GM12878 (cell line): ENCODE measurements at regions of chr9 and their contacts with region 1.

Region 1: GRCh38 chr9:27561685-27562084 is 11.6 kb downstream of the C9orf72 start:
- DNase-seq: no peak
- ATAC-seq: peak; percentile 60
- H3K4me3 ChIP-seq: no peak overlapping the region
- H3K27ac ChIP-seq: no peak overlapping the region
- H3K4me1 ChIP-seq: peaks cover 10% of the 10 kb centered on the region; the same call in 1 of the 2 replicates
- H3K27me3 ChIP-seq: no peaks in the 10 kb centered on the region
- CTCF ChIP-seq: no peak
- EP300 ChIP-seq: no peak
- POLR2A ChIP-seq: no peak
- RAD21 ChIP-seq: no peak

Region 2: GRCh38 chr9:27394154-27394825 is 167.4 kb before region 1 on chr9:
- CTCF ChIA-PET with region 1: no interaction called
- POLR2A ChIA-PET with region 1: no interaction called
- RAD21 ChIA-PET with region 1: no interaction called
- SMC1A ChIA-PET with region 1: no interaction called
- in situ Hi-C with region 1: no loop called
- intact Hi-C with region 1: no loop called
- DNase-seq: no peak
- ATAC-seq: no peak
- H3K4me3 ChIP-seq: no peak overlapping the region
- H3K27ac ChIP-seq: no peak overlapping the region
- H3K4me1 ChIP-seq: no peaks in the 10 kb centered on the region
- H3K27me3 ChIP-seq: no peaks in the 10 kb centered on the region
- CTCF ChIP-seq: no peak
- EP300 ChIP-seq: no peak
- POLR2A ChIP-seq: no peak
- RAD21 ChIP-seq: no peak

Region 3: DNA sequence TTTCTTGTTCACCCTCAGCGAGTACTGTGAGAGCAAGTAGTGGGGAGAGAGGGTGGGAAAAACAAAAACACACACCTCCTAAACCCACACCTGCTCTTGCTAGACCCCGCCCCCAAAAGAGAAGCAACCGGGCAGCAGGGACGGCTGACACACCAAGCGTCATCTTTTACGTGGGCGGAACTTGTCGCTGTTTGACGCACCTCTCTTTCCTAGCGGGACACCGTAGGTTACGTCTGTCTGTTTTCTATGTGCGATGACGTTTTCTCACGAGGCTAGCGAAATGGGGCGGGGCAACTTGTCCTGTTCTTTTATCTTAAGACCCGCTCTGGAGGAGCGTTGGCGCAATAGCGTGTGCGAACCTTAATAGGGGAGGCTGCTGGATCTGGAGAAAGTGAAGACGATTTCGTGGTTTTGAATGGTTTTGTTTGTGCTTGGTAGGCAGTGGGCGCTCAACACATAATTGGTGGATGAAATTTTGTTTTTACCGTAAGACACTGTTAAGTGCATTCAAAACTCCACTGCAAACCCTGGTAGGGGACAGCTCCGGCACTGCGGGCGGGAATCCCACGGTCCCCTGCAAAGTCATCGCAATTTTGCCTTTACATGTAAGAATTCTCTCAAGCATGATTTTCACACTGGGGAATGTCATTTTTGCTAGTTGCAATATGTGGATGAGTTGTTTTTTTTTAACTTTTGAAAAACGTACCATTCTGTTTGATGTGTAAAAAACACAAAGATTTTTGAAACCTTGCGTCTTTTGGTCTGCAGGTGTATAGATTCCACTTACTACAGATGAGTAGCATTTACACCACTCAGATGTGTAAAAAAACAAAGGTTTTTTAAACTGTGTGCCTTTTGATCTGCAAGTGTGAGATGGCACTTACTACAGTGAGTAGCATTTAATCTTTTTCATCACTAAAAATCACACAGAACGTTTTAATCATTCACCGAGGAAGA is 12.2 kb after region 1 on chr9:
- CTCF ChIA-PET with region 1: no interaction called
- POLR2A ChIA-PET with region 1: interaction called, 7 read pairs
- RAD21 ChIA-PET with region 1: interaction called, 4 read pairs
- SMC1A ChIA-PET with region 1: interaction called, 15 read pairs
- in situ Hi-C with region 1: no loop called
- intact Hi-C with region 1: no loop called
- DNase-seq: peak; percentile 98
- ATAC-seq: peak; percentile 86
- H3K4me3 ChIP-seq: peak overlapping the region; percentile 72
- H3K27ac ChIP-seq: peak overlapping the region; percentile 68
- H3K4me1 ChIP-seq: peaks cover 4% of the 10 kb centered on the region; the same call in 1 of the 2 replicates
- H3K27me3 ChIP-seq: no peaks in the 10 kb centered on the region
- CTCF ChIP-seq: no peak
- EP300 ChIP-seq: peak in 1 of 2 experiments; percentile 71; a peak in 3 of 4 replicates
- POLR2A ChIP-seq: peak; percentile 56; the same call in 1 of the 2 replicates
- RAD21 ChIP-seq: no peak

Region 4: DNA sequence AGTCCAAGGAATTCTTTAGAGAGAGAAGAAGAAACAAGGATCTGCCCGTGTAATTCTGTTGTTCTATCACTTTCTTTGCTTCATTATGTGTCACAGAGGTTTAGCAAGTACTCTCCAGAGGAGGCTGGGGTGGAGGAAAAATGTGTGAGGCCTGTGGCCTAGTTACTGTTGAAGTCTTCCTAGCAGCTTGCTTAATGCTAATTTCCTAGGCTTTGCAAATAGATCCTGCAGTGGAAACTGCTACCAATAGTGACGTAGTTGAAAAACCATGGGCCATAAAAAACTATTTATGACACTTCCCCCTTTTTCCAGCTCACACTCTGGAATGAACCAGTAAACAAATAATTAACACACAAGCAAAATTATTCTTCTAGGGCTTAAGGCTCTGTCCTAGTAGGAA is 38.6 kb after region 1 on chr9:
- CTCF ChIA-PET with region 1: no interaction called
- POLR2A ChIA-PET with region 1: no interaction called
- RAD21 ChIA-PET with region 1: no interaction called
- SMC1A ChIA-PET with region 1: no interaction called
- in situ Hi-C with region 1: no loop called
- intact Hi-C with region 1: no loop called
- DNase-seq: no peak
- ATAC-seq: no peak
- H3K4me3 ChIP-seq: no peak overlapping the region
- H3K27ac ChIP-seq: no peak overlapping the region
- H3K4me1 ChIP-seq: no peaks in the 10 kb centered on the region
- H3K27me3 ChIP-seq: no peaks in the 10 kb centered on the region
- CTCF ChIP-seq: no peak
- EP300 ChIP-seq: no peak
- POLR2A ChIP-seq: no peak
- RAD21 ChIP-seq: no peak